B cell (primary cell): ENCODE measurements at regions of chr17 and their contacts with region 1.

Region 1: GRCh38 chr17:39754161-39754951 is 16.6 kb downstream of the GRB7 start:
- DNase-seq: peak; percentile 99
- ATAC-seq: peak; percentile 67
- H3K4me3 ChIP-seq: peak overlapping the region in 4 of 5 experiments; percentile 46 to 63 (median 56)
- H3K4me3 Mint-ChIP-seq: peak overlapping the region; percentile 86
- H3K27ac ChIP-seq: peak overlapping the region; percentile 100
- H3K27ac Mint-ChIP-seq: peak overlapping the region; percentile 97
- H3K4me1 ChIP-seq: peaks cover 57 to 60% of the 10 kb centered on the region in 2 donors
- H3K4me1 Mint-ChIP-seq: peaks cover 63% of the 10 kb centered on the region
- H3K27me3 ChIP-seq: no peaks in the 10 kb centered on the region
- H3K27me3 Mint-ChIP-seq: no peaks in the 10 kb centered on the region
- CTCF ChIP-seq: peak; percentile 93

Region 2: DNA sequence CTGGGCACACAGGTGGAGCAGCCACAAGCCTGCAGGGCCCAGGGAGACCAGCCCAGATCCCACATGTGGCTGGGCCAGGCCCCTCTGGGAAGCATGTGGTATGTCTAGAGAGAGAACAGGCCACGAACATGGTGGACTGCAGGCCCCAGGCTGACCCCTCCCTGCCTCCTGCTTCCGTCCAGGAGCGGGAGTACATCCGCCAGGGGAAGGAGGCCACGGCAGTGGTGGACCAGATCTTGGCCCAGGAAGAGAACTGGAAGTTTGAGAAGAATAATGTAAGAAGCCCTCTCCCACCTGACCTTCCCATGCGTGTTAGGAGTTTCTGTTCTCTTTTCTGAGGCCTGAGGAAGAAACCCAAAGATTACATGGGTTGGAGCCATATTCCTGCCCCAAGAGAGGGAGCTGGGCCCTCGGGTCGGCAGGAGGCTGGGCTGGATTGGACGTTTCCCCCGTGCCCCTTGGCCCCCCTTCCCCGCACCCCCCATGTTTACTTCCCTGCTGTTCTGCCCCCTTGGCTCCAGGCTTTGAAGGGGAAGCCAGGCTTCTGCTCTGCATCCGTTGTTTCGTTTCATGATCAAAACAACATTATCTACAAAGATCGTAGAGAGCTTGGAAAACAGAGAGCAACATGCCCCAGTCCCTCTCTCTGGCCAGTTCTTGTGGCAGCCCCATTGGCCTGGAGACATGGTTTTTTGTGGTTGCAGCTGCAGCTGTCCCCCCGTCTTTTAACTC is 94.9 kb before region 1 on chr17:
- CTCF ChIA-PET with region 1: no interaction called
- POLR2A ChIA-PET with region 1: interaction called, 11 read pairs
- intact Hi-C with region 1: no loop called
- DNase-seq: peak; percentile 66
- ATAC-seq: peak; percentile 51
- H3K4me3 ChIP-seq: peak overlapping the region in 2 of 5 experiments; percentile 7 to 9
- H3K4me3 Mint-ChIP-seq: peak overlapping the region; percentile 67
- H3K27ac ChIP-seq: peak overlapping the region; percentile 81
- H3K27ac Mint-ChIP-seq: peak overlapping the region; percentile 96
- H3K4me1 ChIP-seq: peaks cover 34 to 55% of the 10 kb centered on the region in 2 donors
- H3K4me1 Mint-ChIP-seq: peaks cover 44% of the 10 kb centered on the region
- H3K27me3 ChIP-seq: no peaks in the 10 kb centered on the region
- H3K27me3 Mint-ChIP-seq: no peaks in the 10 kb centered on the region
- CTCF ChIP-seq: no peak

Region 3: DNA sequence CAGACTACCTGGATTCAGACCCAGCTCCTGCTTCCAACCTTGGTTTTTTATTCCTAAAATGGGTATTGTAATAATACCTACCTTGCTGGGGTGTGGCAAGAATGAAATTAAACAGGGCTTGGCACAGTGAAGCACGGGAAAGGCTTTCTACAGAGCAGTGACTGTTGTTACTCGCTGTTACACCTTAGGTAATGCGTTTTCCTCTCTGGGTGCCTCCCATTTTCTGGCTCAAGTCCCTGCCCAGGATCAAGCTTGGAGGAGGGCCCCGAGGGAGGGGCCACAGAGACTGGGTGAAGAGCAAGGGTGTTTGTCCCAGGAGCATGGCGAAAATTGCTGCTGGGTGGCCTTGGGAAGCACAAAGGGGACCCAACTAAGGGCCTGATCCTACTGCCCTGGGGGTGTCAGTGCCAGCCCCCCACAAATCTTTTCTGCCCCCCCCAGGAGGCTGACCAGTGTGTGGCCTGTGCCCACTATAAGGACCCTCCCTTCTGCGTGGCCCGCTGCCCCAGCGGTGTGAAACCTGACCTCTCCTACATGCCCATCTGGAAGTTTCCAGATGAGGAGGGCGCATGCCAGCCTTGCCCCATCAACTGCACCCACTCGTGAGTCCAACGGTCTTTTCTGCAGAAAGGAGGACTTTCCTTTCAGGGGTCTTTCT is 37.3 kb before region 1 on chr17:
- CTCF ChIA-PET with region 1: no interaction called
- POLR2A ChIA-PET with region 1: no interaction called
- intact Hi-C with region 1: no loop called
- DNase-seq: no peak
- ATAC-seq: no peak
- H3K4me3 ChIP-seq: no peak overlapping the region
- H3K4me3 Mint-ChIP-seq: no peak overlapping the region
- H3K27ac ChIP-seq: no peak overlapping the region
- H3K27ac Mint-ChIP-seq: no peak overlapping the region
- H3K4me1 ChIP-seq: no peaks in the 10 kb centered on the region
- H3K4me1 Mint-ChIP-seq: no peaks in the 10 kb centered on the region
- H3K27me3 ChIP-seq: no peaks in the 10 kb centered on the region
- H3K27me3 Mint-ChIP-seq: no peaks in the 10 kb centered on the region
- CTCF ChIP-seq: no peak

Region 4: GRCh38 chr17:39730095-39730921 is 24.0 kb before region 1 on chr17 and contains the start of gene MIEN1:
- CTCF ChIA-PET with region 1: interaction called, 19 read pairs
- POLR2A ChIA-PET with region 1: interaction called, 15 read pairs
- intact Hi-C with region 1: loop called (anchors 1 kb)
- DNase-seq: peak; percentile 95
- ATAC-seq: peak; percentile 94
- H3K4me3 ChIP-seq: peak within 1 kb of the TSS; percentile 63 to 100 (median 78)
- H3K4me3 Mint-ChIP-seq: peak within 1 kb of the TSS; percentile 93
- H3K27ac ChIP-seq: peak within 1 kb of the TSS; percentile 82 to 96
- H3K27ac Mint-ChIP-seq: peak within 1 kb of the TSS; percentile 94
- H3K4me1 ChIP-seq: peaks cover 11 to 17% of the 10 kb centered on the region in 2 donors
- H3K4me1 Mint-ChIP-seq: peaks cover 28% of the 10 kb centered on the region
- H3K27me3 ChIP-seq: no peaks in the 10 kb centered on the region
- H3K27me3 Mint-ChIP-seq: no peaks in the 10 kb centered on the region
- CTCF ChIP-seq: peak; percentile 96
- total RNA-seq, gene MIEN1: 37.9 and 41.1 TPM in 2 replicates

Region 5: GRCh38 chr17:39794249-39794970 is 40.1 kb after region 1 on chr17:
- CTCF ChIA-PET with region 1: interaction called, 25 read pairs
- POLR2A ChIA-PET with region 1: interaction called, 48 read pairs
- intact Hi-C with region 1: loop called (anchors 1 kb)
- DNase-seq: peak; percentile 89
- ATAC-seq: peak; percentile 95
- H3K4me3 ChIP-seq: peak overlapping the region in 1 of 5 experiments; percentile 30
- H3K4me3 Mint-ChIP-seq: peak overlapping the region; percentile 69
- H3K27ac ChIP-seq: peak overlapping the region; percentile 70 to 86
- H3K27ac Mint-ChIP-seq: peak overlapping the region; percentile 91
- H3K4me1 ChIP-seq: peaks cover 81 to 86% of the 10 kb centered on the region in 2 donors
- H3K4me1 Mint-ChIP-seq: peaks cover 72% of the 10 kb centered on the region
- H3K27me3 ChIP-seq: no peaks in the 10 kb centered on the region
- H3K27me3 Mint-ChIP-seq: no peaks in the 10 kb centered on the region
- CTCF ChIP-seq: no peak

Region 6: DNA sequence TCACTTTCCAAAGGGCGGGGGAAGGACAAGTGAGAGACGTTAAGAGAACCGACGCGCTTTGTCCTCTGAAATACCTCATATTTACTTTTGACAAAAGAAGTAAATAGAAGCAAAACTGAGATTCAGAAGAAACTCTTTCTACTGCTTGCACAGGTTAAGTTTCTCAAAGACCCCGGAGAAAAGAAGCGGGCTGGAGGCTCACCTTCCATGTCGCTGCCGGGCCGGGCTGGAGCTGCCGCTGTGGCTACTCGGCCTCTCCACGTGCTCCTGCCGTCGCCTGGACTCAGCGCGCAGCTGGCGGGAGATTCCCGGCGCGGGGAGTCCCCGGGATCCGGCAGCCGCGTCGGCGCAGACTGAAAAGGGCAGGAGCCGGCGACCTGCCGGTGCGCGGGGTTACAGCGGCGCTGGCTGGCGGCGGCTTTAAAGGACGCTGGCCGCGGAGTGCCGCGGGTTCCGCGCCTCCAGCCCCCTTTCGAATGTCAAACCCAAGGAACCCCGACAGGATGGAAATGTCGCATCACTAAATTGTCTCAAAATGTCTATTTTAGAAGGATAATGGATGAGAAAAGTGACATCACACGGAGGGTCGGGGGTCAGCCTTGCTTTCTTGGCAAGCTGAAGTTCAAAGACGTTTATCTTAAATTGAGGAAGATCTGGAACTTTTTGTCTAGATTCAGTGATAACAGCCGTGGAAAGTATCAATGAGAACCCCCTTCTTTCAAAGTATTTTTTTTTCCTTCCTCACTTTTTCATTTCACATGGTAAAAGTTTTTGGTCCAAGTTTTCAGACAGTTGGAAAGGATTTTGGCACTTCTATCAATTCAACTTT is 109.8 kb after region 1 on chr17 and contains the start of gene IKZF3:
- CTCF ChIA-PET with region 1: interaction called, 20 read pairs
- POLR2A ChIA-PET with region 1: interaction called, 58 read pairs
- intact Hi-C with region 1: loop called (anchors 1 kb)
- DNase-seq: peak; percentile 90
- ATAC-seq: peak; percentile 62
- H3K4me3 ChIP-seq: peak within 1 kb of the TSS; percentile 80 to 99 (median 91)
- H3K4me3 Mint-ChIP-seq: peak within 1 kb of the TSS; percentile 99
- H3K27ac ChIP-seq: peak within 1 kb of the TSS; percentile 94 to 96
- H3K27ac Mint-ChIP-seq: peak within 1 kb of the TSS; percentile 87
- H3K4me1 ChIP-seq: peaks cover 43 to 55% of the 10 kb centered on the region in 2 donors
- H3K4me1 Mint-ChIP-seq: peaks cover 62% of the 10 kb centered on the region
- H3K27me3 ChIP-seq: no peaks in the 10 kb centered on the region
- H3K27me3 Mint-ChIP-seq: no peaks in the 10 kb centered on the region
- CTCF ChIP-seq: peak; percentile 45
- total RNA-seq, gene IKZF3: 178 and 187 TPM in 2 replicates

Region 7: DNA sequence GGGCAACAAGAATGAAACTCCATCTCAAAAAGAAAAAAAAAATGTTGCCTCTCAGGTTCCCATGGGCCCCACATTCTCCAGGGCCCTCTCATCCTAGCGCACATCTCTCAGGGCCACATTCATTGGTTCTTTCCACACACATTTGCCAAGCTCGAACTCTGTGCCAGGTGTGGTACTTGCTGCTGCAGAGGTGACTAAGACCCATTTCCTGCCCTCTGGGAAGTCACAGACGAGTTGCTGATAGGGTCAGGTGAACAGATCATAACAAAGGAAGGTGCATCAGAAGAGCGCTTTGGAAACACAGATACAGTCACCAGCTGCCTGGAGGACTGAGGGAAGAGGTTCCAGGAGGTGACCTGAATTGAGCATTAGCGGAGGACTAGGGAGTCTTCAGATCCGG is 209.5 kb after region 1 on chr17:
- CTCF ChIA-PET with region 1: no interaction called
- POLR2A ChIA-PET with region 1: no interaction called
- intact Hi-C with region 1: loop called (anchors 1 kb)
- DNase-seq: no peak
- ATAC-seq: no peak
- H3K4me3 ChIP-seq: no peak overlapping the region
- H3K4me3 Mint-ChIP-seq: no peak overlapping the region
- H3K27ac ChIP-seq: no peak overlapping the region
- H3K27ac Mint-ChIP-seq: no peak overlapping the region
- H3K4me1 ChIP-seq: peaks cover 12 to 13% of the 10 kb centered on the region in 2 donors
- H3K4me1 Mint-ChIP-seq: peaks cover 9% of the 10 kb centered on the region
- H3K27me3 ChIP-seq: no peaks in the 10 kb centered on the region
- H3K27me3 Mint-ChIP-seq: peaks cover 15% of the 10 kb centered on the region
- CTCF ChIP-seq: no peak